Head of caudate nucleus (tissue), 42 donors: ENCODE measurements at regions of chr1 and their contacts with region 1.

Region 1: DNA sequence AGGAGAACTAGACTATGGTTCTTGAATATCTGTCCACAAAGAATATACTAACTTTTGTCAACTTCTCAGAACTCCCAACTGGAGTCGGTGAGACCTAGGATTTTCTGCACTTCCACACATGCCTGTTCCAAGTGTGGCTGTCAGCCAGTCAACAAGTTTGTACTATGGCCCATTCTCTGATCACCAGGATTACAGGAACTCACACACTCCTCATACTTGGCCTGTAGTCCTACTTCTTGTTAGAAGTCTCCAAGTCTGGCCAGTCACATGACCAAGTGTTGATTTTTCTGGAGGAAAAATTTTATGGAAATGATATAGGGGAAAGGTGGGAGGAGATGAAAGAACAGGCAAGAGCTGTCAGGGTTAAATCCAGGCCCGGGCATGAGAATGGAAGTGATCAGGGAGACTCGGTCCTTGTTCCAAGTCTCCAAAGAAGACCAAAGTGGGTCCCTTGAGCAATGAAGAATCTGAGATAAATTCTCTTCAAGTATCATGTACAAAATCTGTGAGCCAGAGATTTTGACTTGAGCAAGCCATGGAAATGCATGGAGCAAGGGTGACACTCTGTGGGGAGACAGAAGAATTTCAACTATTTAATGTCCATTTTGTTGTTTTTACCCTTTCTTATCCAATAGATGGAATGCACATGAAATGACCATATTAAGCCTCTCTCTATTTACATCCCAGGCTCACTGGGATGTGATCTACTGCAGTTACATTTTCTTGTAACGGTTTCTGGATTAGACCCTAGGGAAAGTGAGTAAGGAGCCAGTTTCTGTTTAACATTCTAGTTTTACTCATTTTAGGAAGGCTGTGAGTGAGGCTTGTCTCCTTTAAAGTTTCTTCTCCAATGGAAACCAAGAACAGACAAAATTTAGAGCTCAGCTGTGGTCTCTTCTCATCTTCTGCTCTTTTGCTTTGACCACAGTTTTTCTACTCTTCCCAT is 320.9 kb downstream of the ASTN1 start:
- DNase-seq: peak in 26 of 42 donors; percentile 9 to 67 (median 34)

Region 2: GRCh38 chr1:176374967-176375569 is 468.6 kb before region 1 on chr1:
- intact Hi-C with region 1: loop called (anchors 10 kb)
- DNase-seq: peak; percentile 46 to 89 (median 80)

Region 3: GRCh38 chr1:176701151-176701866 is 142.3 kb before region 1 on chr1:
- intact Hi-C with region 1: no loop called
- DNase-seq: no peak

Region 4: DNA sequence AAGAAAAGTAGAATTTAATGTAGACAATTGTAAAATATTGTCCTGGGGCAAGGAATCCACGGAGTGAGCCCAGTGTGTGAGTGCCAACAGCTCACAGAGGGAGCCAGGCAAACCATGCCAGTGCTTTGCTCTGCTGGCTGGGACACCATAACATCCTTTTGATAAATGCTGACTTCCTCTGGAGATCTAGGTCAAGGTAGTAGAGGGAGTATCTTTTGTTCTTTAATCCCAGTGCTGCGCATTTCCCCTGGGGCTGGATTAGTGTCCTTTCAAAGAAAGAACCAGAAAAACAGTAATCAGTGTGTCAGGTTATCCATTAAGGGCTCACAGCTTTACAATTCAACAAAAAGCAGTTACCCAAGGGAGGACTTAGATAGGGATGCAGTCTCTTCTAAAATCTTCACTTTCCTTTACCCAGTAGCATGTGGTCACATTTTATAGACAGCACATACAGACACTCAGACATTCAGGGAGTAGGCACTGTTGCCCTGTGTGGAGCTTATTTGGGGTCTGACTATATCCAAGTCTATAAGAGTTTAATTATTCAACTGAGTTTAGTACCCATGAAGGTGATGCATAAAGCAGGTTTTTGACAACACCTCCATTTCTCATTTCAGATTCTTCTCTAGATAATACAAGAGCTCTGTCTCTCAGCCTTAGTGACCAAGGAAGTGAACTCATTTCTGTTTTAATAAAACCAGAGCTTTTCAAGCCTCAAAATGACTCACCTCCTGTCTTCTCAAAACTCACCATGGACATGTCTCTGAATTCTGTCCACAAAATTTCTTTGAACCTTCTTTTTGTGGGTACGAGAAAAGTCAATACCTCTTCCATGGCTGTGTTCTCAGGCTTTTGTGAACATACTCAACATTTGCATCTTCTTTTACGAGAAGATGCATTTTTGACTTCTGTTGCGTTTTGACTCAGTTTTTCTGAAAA is 542.4 kb after region 1 on chr1:
- intact Hi-C with region 1: no loop called
- DNase-seq: no peak